GM12878 (cell line): ENCODE measurements at regions of chr4 and their contacts with region 1.

Region 1: DNA sequence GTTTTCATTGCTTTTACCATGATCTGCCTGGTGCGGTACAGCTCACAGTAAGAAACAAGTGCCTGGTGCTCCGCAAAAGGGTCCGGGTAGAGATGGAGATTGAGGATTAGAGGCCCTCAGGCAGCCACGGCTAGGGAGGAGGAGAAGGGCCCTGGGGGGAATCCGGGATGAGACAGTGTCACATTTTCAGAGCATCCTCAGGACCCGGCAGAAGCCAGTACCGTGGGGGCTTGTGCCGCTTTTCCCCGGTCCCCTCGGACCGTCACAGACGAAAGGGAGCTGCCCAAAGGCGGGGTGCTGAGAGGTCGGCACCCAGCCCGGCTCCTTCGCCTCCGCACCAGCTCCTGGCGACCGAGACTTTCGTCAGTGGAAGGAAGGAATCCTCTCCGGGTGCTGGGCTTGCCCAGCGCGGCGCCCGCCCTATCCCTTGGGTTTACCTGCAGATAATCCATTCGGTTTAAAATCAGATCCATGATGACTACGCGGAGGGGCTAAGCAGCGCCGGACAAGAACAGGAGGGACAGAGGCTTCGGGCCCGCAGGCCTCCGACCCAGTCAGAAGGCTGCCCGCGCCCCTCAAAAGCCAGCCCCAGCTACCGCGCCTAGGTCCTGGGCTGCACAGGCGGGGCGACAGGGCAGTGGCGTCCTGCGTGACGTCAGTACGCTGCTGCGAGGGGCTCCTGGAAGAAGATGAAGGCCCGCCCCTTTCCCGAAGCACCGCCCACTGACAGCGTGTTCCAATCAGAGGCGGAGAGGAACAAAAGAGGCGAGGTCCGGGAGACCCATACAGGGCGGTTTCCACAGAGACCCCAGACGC is at the start of gene BBS7:
- DNase-seq: peak; percentile 81
- ATAC-seq: peak; percentile 99
- H3K4me3 ChIP-seq: peak within 1 kb of the TSS; percentile 83
- H3K27ac ChIP-seq: peak within 1 kb of the TSS; percentile 42; the same call in 1 of the 2 replicates
- H3K4me1 ChIP-seq: no peaks in the 10 kb centered on the region
- H3K27me3 ChIP-seq: no peaks in the 10 kb centered on the region
- CTCF ChIP-seq: no peak
- EP300 ChIP-seq: no peak
- POLR2A ChIP-seq: peak; percentile 88
- RAD21 ChIP-seq: no peak
- polyA plus RNA-seq, gene BBS7: 7.4 to 8.8 TPM

Region 2: GRCh38 chr4:121696581-121697461 is 173.2 kb before region 1 on chr4 and contains the start of gene ANXA5:
- CTCF ChIA-PET with region 1: no interaction called
- POLR2A ChIA-PET with region 1: interaction called, 4 read pairs
- RAD21 ChIA-PET with region 1: no interaction called
- SMC1A ChIA-PET with region 1: no interaction called
- in situ Hi-C with region 1: no loop called
- intact Hi-C with region 1: loop called (anchors 5 kb)
- DNase-seq: no peak
- ATAC-seq: peak; percentile 95
- H3K4me3 ChIP-seq: peak within 1 kb of the TSS; percentile 90
- H3K27ac ChIP-seq: peak within 1 kb of the TSS; percentile 85
- H3K4me1 ChIP-seq: peaks cover 15% of the 10 kb centered on the region
- H3K27me3 ChIP-seq: no peaks in the 10 kb centered on the region
- CTCF ChIP-seq: peak; percentile 1 to 54 (median 33); a peak in 3 of 6 replicates
- EP300 ChIP-seq: 0 out of 4 replicates have a peak, but pooled peaks of 1 of the 2 experiments have one; percentile 3
- POLR2A ChIP-seq: peak; percentile 94
- RAD21 ChIP-seq: peak; percentile 38; the same call in 1 of the 2 replicates
- polyA plus RNA-seq, gene ANXA5: 218 to 249 TPM

Region 3: GRCh38 chr4:121741768-121742167 is 128.3 kb before region 1 on chr4:
- CTCF ChIA-PET with region 1: no interaction called
- POLR2A ChIA-PET with region 1: no interaction called
- RAD21 ChIA-PET with region 1: no interaction called
- SMC1A ChIA-PET with region 1: no interaction called
- in situ Hi-C with region 1: no loop called
- intact Hi-C with region 1: no loop called
- DNase-seq: no peak
- ATAC-seq: no peak
- H3K4me3 ChIP-seq: no peak overlapping the region
- H3K27ac ChIP-seq: no peak overlapping the region
- H3K4me1 ChIP-seq: no peaks in the 10 kb centered on the region
- H3K27me3 ChIP-seq: no peaks in the 10 kb centered on the region
- CTCF ChIP-seq: no peak
- EP300 ChIP-seq: no peak
- POLR2A ChIP-seq: no peak
- RAD21 ChIP-seq: no peak

Region 4: DNA sequence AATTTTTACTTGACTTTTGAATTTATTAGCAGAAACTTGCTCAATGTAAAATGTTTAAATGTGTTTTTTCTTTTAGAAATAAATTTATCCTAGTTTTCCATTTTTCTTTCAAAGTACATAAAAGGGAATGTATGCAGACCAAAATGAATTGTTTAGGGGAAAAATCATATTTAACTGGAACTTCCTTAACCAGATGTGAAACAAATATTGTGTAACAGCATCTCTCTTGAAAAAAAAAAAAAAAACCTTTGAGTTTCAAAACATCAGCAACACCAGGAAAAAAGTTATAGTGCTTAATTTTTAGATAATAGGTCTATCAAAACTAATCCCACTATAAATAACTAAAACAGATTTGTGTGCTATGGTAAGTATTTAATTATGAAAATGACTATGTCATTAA is 31.9 kb before region 1 on chr4:
- CTCF ChIA-PET with region 1: no interaction called
- POLR2A ChIA-PET with region 1: no interaction called
- RAD21 ChIA-PET with region 1: no interaction called
- SMC1A ChIA-PET with region 1: no interaction called
- in situ Hi-C with region 1: no loop called
- intact Hi-C with region 1: no loop called
- DNase-seq: no peak
- ATAC-seq: no peak
- H3K4me3 ChIP-seq: no peak overlapping the region
- H3K27ac ChIP-seq: no peak overlapping the region
- H3K4me1 ChIP-seq: no peaks in the 10 kb centered on the region
- H3K27me3 ChIP-seq: no peaks in the 10 kb centered on the region
- CTCF ChIP-seq: no peak
- EP300 ChIP-seq: no peak
- POLR2A ChIP-seq: no peak
- RAD21 ChIP-seq: no peak